ENCODE measurements at regions of chr1 and their contacts with region 1.

Region 1: DNA sequence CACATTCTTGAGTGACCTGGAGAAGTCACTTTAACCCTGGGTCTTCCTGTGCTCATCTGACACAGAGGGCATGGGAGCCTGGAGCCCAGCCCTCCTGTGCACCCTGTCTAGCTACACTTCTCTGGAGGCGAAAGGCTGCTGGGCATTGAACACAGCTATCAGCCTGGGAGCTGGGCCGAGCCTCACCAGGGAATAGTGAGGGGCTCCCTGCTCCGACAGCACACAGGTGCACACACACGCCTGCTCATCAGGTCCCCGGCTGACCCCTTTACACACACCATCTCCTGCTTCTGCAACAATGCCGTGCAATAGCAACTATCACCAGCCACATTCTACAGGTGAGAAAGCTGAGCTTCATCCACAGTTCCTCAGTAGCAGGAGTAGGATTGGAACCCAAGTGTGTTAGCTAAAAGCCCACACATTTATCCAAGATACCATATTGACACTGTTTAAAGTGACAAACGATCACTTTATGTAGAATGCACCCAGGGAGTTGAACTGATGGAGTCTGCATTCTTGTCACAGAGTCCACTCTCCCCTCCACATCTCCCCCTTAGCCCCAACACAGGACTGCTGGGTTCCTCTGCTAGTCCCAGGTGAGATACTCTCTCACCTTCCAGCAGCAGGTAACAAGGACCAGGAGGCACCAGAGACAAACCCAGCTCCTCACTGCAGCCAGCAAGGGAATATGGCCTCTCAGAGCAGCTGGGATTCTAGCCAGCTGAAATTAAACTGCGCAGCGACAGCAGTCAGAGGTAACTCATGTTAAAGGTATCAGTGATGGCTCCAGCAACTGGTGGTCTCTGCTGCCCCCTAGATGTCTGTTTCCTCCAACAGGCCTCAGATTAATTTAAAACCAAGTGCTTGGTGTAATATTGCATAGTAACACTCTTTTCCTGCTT is 18.3 kb upstream of the CAPN8 start:
- DNase-seq: peak; percentile 76
- H3K4me3 ChIP-seq: no peak overlapping the region
- H3K27ac ChIP-seq: no peak overlapping the region
- H3K4me1 ChIP-seq: no peaks in the 10 kb centered on the region
- H3K27me3 ChIP-seq: no peaks in the 10 kb centered on the region
- CTCF ChIP-seq: peak; percentile 60

Region 2: GRCh38 chr1:223133824-223134435 is 549.9 kb before region 1 on chr1:
- intact Hi-C with region 1: loop called (anchors 2 kb)
- DNase-seq: peak; percentile 88
- H3K4me3 ChIP-seq: peak overlapping the region; percentile 21
- H3K27ac ChIP-seq: peak overlapping the region; percentile 58
- H3K4me1 ChIP-seq: no peaks in the 10 kb centered on the region
- H3K27me3 ChIP-seq: no peaks in the 10 kb centered on the region
- CTCF ChIP-seq: peak; percentile 97

Region 3: GRCh38 chr1:223531742-223532341 is 152.0 kb before region 1 on chr1:
- intact Hi-C with region 1: loop called (anchors 5 kb)
- DNase-seq: peak; percentile 81
- H3K4me3 ChIP-seq: no peak overlapping the region
- H3K27ac ChIP-seq: no peak overlapping the region
- H3K4me1 ChIP-seq: no peaks in the 10 kb centered on the region
- H3K27me3 ChIP-seq: no peaks in the 10 kb centered on the region
- CTCF ChIP-seq: peak; percentile 44

Measured in colonic mucosa (tissue), 4 donors.